Mammary epithelial cell (primary cell): ENCODE measurements at regions of chr1 and their contacts with region 1.

Region 1: GRCh38 chr1:150629115-150629928 is at the start of gene ENSA:
- DNase-seq: peak; percentile 99
- H3K4me3 ChIP-seq: peak within 1 kb of the TSS; percentile 83 to 87 (median 83)
- H3K27ac ChIP-seq: peak within 1 kb of the TSS; percentile 91
- H3K4me1 ChIP-seq: peaks cover 47% of the 10 kb centered on the region
- H3K27me3 ChIP-seq: no peaks in the 10 kb centered on the region
- CTCF ChIP-seq: no peak
- total RNA-seq, gene ENSA: 62.5 to 178 TPM

Region 2: DNA sequence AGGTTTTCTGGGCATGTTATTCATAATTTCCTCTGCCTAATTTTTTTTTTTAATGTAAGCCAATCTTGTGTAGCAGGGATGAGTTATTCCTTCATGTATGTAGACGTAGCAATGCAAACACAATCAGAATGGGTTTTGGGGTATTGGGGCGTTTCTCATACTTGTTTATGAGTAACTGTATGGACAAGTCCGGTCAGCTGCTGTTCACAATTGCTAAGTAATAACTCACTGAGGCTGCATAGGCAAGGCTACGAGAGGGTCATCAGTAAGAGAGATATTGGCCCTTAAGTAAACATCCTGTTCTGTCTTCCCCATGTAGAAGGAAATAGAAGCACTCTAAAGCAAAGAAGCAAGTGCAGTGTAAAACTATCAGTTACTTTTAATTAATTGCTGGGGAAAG is 151.6 kb before region 1 on chr1:
- CTCF ChIA-PET with region 1: no interaction called
- dilution Hi-C with region 1: no loop called
- in situ Hi-C with region 1: no loop called
- intact Hi-C with region 1: loop called (anchors 10 kb)
- DNase-seq: peak; percentile 92
- H3K4me3 ChIP-seq: no peak overlapping the region
- H3K27ac ChIP-seq: peak overlapping the region; percentile 94
- H3K4me1 ChIP-seq: peaks cover 25% of the 10 kb centered on the region
- H3K27me3 ChIP-seq: no peaks in the 10 kb centered on the region
- CTCF ChIP-seq: no peak

Region 3: GRCh38 chr1:150572918-150573647 is 56.2 kb before region 1 on chr1:
- CTCF ChIA-PET with region 1: no interaction called
- dilution Hi-C with region 1: loop called (anchors 5 kb)
- in situ Hi-C with region 1: loop called in 1 of 2 experiments (anchors 5 kb)
- intact Hi-C with region 1: no loop called
- DNase-seq: no peak
- H3K4me3 ChIP-seq: no peak overlapping the region
- H3K27ac ChIP-seq: no peak overlapping the region
- H3K4me1 ChIP-seq: peaks cover 44% of the 10 kb centered on the region
- H3K27me3 ChIP-seq: no peaks in the 10 kb centered on the region
- CTCF ChIP-seq: no peak

Region 4: DNA sequence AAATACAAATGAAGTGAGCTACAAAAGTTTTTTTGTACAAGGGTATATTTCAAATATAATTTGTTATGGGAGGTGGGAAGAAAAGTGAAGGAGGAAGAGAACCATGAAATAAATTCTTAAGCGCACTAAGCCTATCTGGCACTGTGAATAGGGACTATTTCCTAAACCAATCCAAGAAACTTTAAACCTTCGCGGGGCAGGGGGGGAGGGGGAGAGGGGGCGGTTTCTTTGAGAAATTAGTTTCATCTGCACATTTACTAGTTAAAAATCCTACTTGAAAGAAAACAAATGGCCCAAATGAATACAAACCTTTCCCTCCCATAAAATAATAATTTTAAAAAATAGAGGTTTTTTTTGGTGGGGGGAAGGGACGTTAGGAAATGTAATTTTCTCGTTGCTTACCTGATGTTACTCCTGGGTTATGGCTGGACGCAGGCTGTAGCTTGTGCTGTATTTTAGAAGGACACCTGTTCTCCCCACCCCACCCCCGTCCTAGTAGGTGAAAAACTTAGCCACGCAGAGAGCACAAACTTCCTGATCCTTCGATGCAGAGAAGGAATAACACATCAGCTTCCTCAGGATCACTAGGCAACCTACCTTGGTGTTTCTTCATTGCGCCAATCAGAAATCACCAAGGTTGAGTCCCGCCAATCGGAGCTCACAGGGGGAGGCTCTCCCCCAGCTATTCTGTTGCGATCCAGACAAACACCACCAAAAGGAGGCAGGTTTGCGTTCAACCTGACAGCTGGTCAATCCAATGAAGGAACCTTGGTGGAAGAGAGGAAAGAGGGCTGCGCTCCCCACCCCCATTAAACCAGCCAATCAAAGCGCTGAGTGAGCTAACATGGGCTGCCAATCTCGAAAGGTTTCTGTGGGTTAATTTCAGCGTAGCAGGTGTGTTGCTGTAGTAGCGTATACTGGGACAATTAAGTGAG is 67.5 kb after region 1 on chr1 and contains the start of gene GOLPH3L:
- CTCF ChIA-PET with region 1: no interaction called
- dilution Hi-C with region 1: no loop called
- in situ Hi-C with region 1: no loop called
- intact Hi-C with region 1: loop called (anchors 5 kb)
- DNase-seq: peak; percentile 100
- H3K4me3 ChIP-seq: peak within 1 kb of the TSS; percentile 59 to 90 (median 60)
- H3K27ac ChIP-seq: peak within 1 kb of the TSS; percentile 65
- H3K4me1 ChIP-seq: peaks cover 8% of the 10 kb centered on the region
- H3K27me3 ChIP-seq: no peaks in the 10 kb centered on the region
- CTCF ChIP-seq: peak in 1 of 2 donors; percentile 31
- total RNA-seq, gene GOLPH3L: 11.7 to 22.4 TPM

Region 5: DNA sequence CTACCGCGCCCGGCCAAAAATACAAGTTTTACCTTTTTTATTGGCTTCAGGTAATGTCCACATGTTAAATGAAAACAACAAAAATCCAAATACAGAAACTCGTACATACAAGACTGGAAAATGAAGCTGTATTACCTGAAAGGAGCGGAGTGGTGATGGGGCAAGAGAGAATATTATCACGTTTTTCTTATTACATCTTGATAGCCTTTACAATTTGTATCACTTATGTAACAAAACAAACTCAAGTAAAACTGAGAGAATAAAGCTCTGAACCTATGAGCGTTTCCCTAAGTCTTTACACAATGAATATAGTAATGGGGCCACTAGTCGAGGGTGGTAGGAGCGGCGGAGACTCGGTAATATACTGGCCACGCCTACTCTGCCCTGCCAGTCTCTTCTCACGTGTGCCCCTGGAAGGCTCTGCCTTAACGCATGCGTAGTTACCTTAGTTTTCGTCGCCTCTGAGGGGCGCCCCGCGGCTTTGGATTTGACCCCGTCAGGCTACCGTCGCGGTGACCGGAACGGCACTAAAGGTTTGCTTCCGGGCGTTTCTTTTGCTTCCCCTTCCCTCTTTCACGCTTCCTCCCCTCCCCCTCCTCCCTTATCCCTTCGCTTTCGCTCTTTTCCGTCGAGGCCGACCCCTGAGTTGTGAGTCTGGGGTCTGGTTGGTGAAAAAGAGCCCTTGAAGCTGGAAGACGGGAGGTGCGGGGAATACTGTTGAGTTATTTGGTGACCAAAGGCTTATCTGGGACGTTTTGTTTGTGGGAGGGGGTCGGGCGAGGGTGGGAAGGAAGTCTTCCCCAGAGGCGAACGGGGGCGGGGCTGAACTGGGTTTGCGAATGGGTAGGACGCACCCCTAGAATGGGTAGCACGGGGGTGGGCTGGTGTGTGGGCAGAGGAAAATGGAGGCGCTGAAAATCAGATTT is 296.8 kb after region 1 on chr1 and contains the start of gene SETDB1:
- CTCF ChIA-PET with region 1: no interaction called
- dilution Hi-C with region 1: no loop called
- in situ Hi-C with region 1: no loop called
- intact Hi-C with region 1: loop called (anchors 5 kb)
- DNase-seq: peak; percentile 92
- H3K4me3 ChIP-seq: peak within 1 kb of the TSS; percentile 70 to 100 (median 88)
- H3K27ac ChIP-seq: peak within 1 kb of the TSS; percentile 75
- H3K4me1 ChIP-seq: peaks cover 11% of the 10 kb centered on the region
- H3K27me3 ChIP-seq: no peaks in the 10 kb centered on the region
- CTCF ChIP-seq: peak in 1 of 2 donors; percentile 23
- total RNA-seq, gene SETDB1: 30.3 TPM

Region 6: GRCh38 chr1:151008190-151008860 is 379.0 kb after region 1 on chr1 and contains the start of gene PRUNE1:
- CTCF ChIA-PET with region 1: no interaction called
- dilution Hi-C with region 1: no loop called
- in situ Hi-C with region 1: no loop called
- intact Hi-C with region 1: loop called (anchors 5 kb)
- DNase-seq: peak; percentile 93
- H3K4me3 ChIP-seq: peak within 1 kb of the TSS; percentile 78 to 93 (median 80)
- H3K27ac ChIP-seq: peak within 1 kb of the TSS; percentile 97
- H3K4me1 ChIP-seq: peaks cover 47% of the 10 kb centered on the region
- H3K27me3 ChIP-seq: no peaks in the 10 kb centered on the region
- CTCF ChIP-seq: no peak
- total RNA-seq, gene PRUNE1: 9.4 to 16.3 TPM